ENCODE measurements at regions of chr1 and their contacts with region 1.

Region 1: GRCh38 chr1:6727535-6727934 is 25.9 kb upstream of the DNAJC11 start:
- DNase-seq: peak in 2 of 3 donors; percentile 59 to 74
- ATAC-seq: peak; percentile 63
- H3K4me3 ChIP-seq: no peak overlapping the region
- H3K4me1 ChIP-seq: no peaks in the 10 kb centered on the region
- CTCF ChIP-seq: peak; percentile 84

Region 2: DNA sequence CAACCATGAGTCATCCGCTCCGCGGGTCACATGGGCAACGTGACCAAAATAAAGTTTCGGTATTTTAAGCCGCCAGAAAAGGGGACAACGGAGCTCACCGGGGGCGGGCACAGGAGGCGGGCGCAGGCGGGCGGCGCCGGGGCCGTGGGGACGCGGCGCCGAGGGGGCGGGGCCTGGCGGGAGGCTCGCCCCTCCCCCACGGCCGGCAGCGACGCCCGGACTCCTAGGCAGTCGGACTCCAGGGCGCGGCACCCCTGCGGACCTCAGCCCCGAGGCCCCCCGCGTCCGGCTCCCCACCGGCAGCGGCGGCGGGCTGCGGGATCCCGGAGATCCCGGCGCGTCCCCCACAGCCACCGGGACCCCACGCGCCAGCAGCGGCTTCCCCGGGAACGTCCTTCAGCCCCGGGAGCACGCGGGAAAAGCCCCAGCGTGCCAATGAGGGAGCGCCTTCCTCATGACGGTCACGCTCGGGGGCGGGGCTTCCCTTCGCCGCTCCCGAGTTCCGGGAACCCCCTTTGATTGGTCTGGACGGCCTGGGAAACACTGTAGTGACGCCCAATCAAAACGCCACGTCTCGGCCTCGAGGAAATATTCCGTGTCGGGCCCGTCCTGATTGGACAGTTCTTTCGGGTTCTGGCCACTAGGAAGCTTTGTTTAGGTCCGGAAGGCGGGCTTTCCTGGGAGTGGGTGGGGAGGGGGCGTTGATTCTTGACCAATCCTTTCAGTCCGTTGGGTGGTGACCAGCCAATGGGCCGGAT is 57.2 kb after region 1 on chr1:
- intact Hi-C with region 1: no loop called
- DNase-seq: peak; percentile 99 to 100 (median 99)
- ATAC-seq: peak; percentile 90
- H3K4me3 ChIP-seq: peak overlapping the region; percentile 66
- H3K4me1 ChIP-seq: peaks cover 8% of the 10 kb centered on the region
- CTCF ChIP-seq: no peak

Region 3: GRCh38 chr1:7070389-7071029 is 343.0 kb after region 1 on chr1:
- intact Hi-C with region 1: loop called (anchors 10 kb)
- DNase-seq: peak in 2 of 3 donors; percentile 49 to 79
- ATAC-seq: peak; percentile 83
- H3K4me3 ChIP-seq: no peak overlapping the region
- H3K4me1 ChIP-seq: peaks cover 4% of the 10 kb centered on the region
- CTCF ChIP-seq: peak; percentile 64

Region 4: DNA sequence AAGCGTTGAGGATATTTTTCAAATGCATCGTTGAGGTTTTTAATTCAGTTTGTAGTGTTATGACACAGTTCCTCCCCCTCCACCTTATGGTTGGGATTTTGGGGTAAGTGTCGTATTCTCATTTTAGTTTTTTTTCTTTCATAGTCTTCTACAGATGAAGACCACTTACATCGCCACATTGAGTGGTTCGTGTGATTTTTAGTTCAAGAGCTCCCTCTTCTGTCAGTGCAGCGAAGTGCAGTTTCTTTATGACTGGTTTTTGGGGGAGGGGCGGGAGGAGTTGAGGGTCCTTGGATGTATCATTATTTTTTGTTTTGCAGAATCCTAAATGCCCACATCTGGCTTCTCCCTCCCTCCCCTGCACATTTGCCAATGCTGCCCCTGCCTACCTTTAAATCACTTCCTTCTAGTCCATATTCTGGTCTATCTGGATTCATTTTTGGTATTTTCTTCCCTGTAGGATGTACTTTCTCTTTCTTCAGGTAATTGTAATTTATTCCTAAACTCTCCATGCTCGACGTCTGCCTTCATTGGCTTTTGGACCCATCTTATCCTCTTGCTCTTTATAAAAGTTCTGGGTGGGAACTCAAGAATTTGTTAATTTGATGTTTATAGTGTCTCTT is 490.8 kb after region 1 on chr1:
- intact Hi-C with region 1: loop called in 1 of 2 experiments (anchors 10 kb)
- DNase-seq: peak in 1 of 3 donors; percentile 65
- ATAC-seq: no peak
- H3K4me3 ChIP-seq: no peak overlapping the region
- H3K4me1 ChIP-seq: no peaks in the 10 kb centered on the region
- CTCF ChIP-seq: no peak